HEK293T (cell line): ENCODE measurements at regions of chr3 and their contacts with region 1.

Region 1: GRCh38 chr3:45659661-45660559 is 29.3 kb upstream of the SACM1L start:
- DNase-seq: peak; percentile 75

Region 2: GRCh38 chr3:45546716-45547701 is 112.9 kb before region 1 on chr3:
- CTCF ChIA-PET with region 1: interaction called, 16 read pairs
- POLR2A ChIA-PET with region 1: no interaction called
- DNase-seq: peak; percentile 57